ENCODE measurements at regions of chr13 and their contacts with region 1.

Region 1: GRCh38 chr13:46603165-46603603 is 50.2 kb downstream of the LRCH1 start:
- DNase-seq: peak in 1 of 5 donors; percentile 46
- ATAC-seq: peak in 3 of 4 donors; percentile 20 to 37 (median 33)
- H3K4me3 ChIP-seq: no peak overlapping the region
- H3K27ac ChIP-seq: peak overlapping the region in 8 of 12 donors; percentile 16 to 68 (median 48)
- H3K4me1 ChIP-seq: peaks cover 14 to 97% (median 80%) of the 10 kb centered on the region in 12 donors
- H3K27me3 ChIP-seq: no peaks in the 10 kb centered on the region
- CTCF ChIP-seq: peak; percentile 19 to 56 (median 32)
- POLR2A ChIP-seq: no peak

Region 2: GRCh38 chr13:46622630-46623256 is 19.6 kb after region 1 on chr13:
- intact Hi-C with region 1: loop called in 1 of 10 experiments (anchors 2 kb)
- DNase-seq: peak in 4 of 5 donors; percentile 43 to 66 (median 56)
- ATAC-seq: peak; percentile 53 to 84 (median 78)
- H3K4me3 ChIP-seq: no peak overlapping the region
- H3K27ac ChIP-seq: peak overlapping the region in 2 of 12 donors; percentile 16 to 66
- H3K4me1 ChIP-seq: peaks cover 3 to 70% (median 50%) of the 10 kb centered on the region in 12 donors
- H3K27me3 ChIP-seq: no peaks in the 10 kb centered on the region
- CTCF ChIP-seq: no peak
- POLR2A ChIP-seq: no peak

Region 3: DNA sequence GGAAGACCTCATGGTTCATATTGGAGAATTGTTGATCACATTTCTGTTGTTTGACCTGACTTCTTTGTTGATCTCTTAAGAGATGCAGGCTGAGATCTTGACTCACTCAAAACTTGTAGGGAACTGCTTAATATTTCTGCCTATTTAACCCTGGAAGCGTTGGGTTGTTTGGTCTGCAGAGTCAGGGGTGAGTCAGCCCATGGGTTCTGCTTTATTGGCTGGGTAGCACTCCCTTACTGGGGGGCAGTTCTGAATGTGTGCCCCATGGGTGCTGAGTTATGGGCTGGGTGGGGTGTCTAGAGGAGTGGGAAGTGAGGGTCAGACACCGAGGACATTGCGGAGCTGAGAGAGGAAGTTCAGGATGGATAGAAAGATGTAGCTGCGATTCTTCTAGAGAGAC is 37.7 kb after region 1 on chr13:
- intact Hi-C with region 1: loop called in 1 of 10 experiments (anchors 5 kb)
- DNase-seq: no peak
- ATAC-seq: peak in 2 of 4 donors; percentile 31 to 35
- H3K4me3 ChIP-seq: peak overlapping the region in 5 of 12 donors; percentile 29 to 38 (median 34)
- H3K27ac ChIP-seq: peak overlapping the region; percentile 8 to 79 (median 60)
- H3K4me1 ChIP-seq: peaks cover 12 to 92% (median 64%) of the 10 kb centered on the region in 12 donors
- H3K27me3 ChIP-seq: no peaks in the 10 kb centered on the region
- CTCF ChIP-seq: no peak
- POLR2A ChIP-seq: no peak

Region 4: GRCh38 chr13:46655377-46656180 is 52.4 kb after region 1 on chr13:
- intact Hi-C with region 1: loop called in 1 of 10 experiments (anchors 5 kb)
- DNase-seq: no peak
- ATAC-seq: peak; percentile 59 to 85 (median 74)
- H3K4me3 ChIP-seq: peak overlapping the region in 3 of 12 donors; percentile 2 to 6 (median 3)
- H3K27ac ChIP-seq: peak overlapping the region; percentile 15 to 77 (median 65)
- H3K4me1 ChIP-seq: peaks cover 10 to 51% (median 29%) of the 10 kb centered on the region in 12 donors
- H3K27me3 ChIP-seq: no peaks in the 10 kb centered on the region
- CTCF ChIP-seq: no peak
- POLR2A ChIP-seq: no peak